ENCODE measurements at regions of chr1 and their contacts with region 1.

Region 1: DNA sequence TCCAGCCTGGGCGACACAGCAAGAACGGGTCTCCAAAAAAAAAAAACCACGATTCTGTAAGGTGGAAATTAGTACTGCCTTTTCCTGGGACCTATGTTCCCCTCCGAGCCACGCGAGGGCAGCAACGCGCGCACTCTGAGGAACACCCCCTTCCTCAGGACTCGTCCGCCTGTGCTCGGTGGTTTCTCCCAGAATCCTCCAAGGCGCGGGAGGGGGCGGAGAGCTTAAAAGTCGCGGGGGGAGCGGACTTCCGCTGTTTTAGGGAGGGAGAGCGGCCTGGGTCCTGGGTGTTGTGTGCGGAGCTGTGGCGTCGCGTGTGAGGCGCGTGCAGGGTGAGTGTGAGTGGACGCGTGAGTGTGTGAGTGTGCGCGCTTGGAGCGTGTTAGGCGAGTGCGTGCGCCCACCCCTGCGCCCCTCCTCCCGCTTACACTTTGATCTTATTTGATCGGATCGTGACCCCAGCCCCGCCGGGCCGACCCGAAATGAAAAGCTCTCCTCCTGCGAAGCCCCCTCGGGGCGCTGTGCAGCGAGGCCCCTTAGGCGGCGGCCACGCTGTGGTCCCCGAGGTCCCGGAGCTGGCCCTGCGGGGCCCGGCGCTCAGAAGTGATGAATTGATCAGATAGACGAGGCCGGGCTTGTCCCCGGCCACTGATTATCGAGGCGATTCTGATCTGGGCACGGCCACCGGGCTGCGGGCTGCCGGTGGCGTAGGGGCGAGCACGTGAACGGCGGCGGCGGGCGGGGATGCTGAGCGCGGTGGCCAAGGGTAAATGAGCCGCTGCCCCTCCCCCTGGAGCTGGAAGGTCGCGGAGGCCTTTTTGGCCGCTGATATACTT is 9.6 kb downstream of the TMEM167B start:
- DNase-seq: peak; percentile 94 to 99 (median 96)

Region 2: GRCh38 chr1:109181105-109181806 is 81.1 kb after region 1 on chr1:
- intact Hi-C with region 1: no loop called
- DNase-seq: peak in 1 of 10 donors; percentile 1

Region 3: DNA sequence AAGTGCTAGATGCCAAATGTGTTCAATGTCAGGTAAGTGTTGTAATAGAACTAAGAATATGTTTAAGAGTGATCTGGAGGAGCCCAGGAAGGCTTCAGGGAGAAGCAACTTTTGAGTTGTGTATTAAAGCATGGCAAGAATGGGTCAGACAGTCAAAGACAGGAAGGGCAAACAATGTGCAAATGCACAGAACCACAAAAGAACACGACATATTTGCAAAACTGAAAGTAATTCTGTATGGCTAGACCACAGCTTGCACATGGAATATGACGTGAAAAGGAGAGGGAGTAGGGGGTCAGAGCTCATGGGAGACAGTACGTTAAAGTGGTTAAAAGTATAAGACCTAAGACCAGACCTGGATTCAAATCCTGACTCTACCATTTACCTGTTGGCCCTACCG is 304.7 kb after region 1 on chr1:
- intact Hi-C with region 1: loop called (anchors 10 kb)
- DNase-seq: no peak